ENCODE measurements at regions of chr5 and their contacts with region 1.

Region 1: DNA sequence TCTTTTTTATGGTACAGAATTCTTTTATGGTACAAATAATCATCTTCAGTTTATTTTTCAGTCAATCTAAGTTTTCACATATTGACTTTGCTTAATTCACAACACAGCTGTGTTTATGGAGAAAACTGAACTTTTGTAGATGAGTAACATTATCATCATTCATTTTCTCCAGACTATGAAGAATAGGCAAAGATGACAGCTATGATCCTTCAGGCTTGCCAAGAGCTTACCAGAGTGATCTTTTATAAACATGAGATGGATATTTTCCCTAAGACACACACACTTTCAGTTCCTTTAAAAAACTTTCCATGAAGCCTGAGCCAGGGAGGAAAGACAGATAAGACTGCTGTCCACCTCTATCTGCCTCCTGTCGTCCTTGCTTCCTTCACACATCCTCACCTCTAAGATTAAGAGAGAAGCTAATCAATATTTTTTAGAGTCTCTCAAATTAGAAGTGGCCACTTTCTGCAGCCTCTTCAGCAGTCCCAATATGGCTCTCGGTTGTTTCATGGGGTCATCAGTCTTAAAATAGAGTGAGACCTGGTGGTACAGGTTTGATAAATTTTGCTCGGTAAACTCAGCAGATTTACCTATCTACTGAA is 108.1 kb upstream of the SLC27A6 start:
- DNase-seq: no peak
- ATAC-seq: no peak
- H3K4me3 ChIP-seq: no peak overlapping the region
- H3K27ac ChIP-seq: no peak overlapping the region
- H3K4me1 ChIP-seq: no peaks in the 10 kb centered on the region
- H3K27me3 ChIP-seq: no peaks in the 10 kb centered on the region
- CTCF ChIP-seq: no peak

Region 2: GRCh38 chr5:127757576-127757975 is 1099.6 kb before region 1 on chr5:
- CTCF ChIA-PET with region 1: interaction called, 14 read pairs
- POLR2A ChIA-PET with region 1: no interaction called
- in situ Hi-C with region 1: no loop called
- intact Hi-C with region 1: no loop called
- DNase-seq: peak; percentile 47
- ATAC-seq: no peak
- H3K4me3 ChIP-seq: no peak overlapping the region
- H3K27ac ChIP-seq: no peak overlapping the region
- H3K4me1 ChIP-seq: no peaks in the 10 kb centered on the region
- H3K27me3 ChIP-seq: no peaks in the 10 kb centered on the region
- CTCF ChIP-seq: peak; percentile 46

Region 3: GRCh38 chr5:128777052-128777451 is 80.1 kb before region 1 on chr5:
- CTCF ChIA-PET with region 1: no interaction called
- POLR2A ChIA-PET with region 1: no interaction called
- in situ Hi-C with region 1: no loop called
- intact Hi-C with region 1: no loop called
- DNase-seq: no peak
- ATAC-seq: no peak
- H3K4me3 ChIP-seq: no peak overlapping the region
- H3K27ac ChIP-seq: no peak overlapping the region
- H3K4me1 ChIP-seq: no peaks in the 10 kb centered on the region
- H3K27me3 ChIP-seq: no peaks in the 10 kb centered on the region
- CTCF ChIP-seq: no peak

Region 4: DNA sequence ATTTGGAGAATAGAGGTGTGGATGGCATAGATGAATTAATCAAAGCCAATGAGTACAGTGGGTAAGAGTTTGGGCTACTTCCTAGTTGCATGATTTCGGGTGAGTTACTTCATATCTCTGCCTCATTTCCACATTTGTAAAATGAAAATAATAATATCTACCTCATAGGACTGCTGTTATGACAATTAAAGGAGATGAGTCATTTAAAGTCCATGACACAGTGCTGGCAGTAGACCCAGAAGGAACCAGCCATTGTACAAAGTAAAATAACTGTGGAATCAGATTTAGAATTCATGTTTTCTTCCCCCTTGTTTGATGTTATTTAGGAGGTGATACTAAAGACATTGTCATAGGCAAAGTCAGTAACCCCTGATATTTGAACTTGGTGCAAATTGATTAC is 31.4 kb before region 1 on chr5:
- CTCF ChIA-PET with region 1: no interaction called
- POLR2A ChIA-PET with region 1: no interaction called
- in situ Hi-C with region 1: no loop called
- intact Hi-C with region 1: no loop called
- DNase-seq: no peak
- ATAC-seq: no peak
- H3K4me3 ChIP-seq: no peak overlapping the region
- H3K27ac ChIP-seq: no peak overlapping the region
- H3K4me1 ChIP-seq: no peaks in the 10 kb centered on the region
- H3K27me3 ChIP-seq: no peaks in the 10 kb centered on the region
- CTCF ChIP-seq: no peak

Measured in Panc1 (cell line).